Activated CD4-positive, alpha-beta T cell treated with anti-CD3 and anti-CD28 coated beads for 36 hours (primary cell): ENCODE measurements at regions of chr11 and their contacts with region 1.

Region 1: GRCh38 chr11:819129-819931 is 616 bp downstream of the PNPLA2 start:
- DNase-seq: peak; percentile 95
- ATAC-seq: peak; percentile 82
- H3K4me3 Mint-ChIP-seq: peak overlapping the region; percentile 72
- H3K27ac Mint-ChIP-seq: no peak overlapping the region
- H3K4me1 Mint-ChIP-seq: peaks cover 11% of the 10 kb centered on the region
- H3K27me3 Mint-ChIP-seq: no peaks in the 10 kb centered on the region

Region 2: DNA sequence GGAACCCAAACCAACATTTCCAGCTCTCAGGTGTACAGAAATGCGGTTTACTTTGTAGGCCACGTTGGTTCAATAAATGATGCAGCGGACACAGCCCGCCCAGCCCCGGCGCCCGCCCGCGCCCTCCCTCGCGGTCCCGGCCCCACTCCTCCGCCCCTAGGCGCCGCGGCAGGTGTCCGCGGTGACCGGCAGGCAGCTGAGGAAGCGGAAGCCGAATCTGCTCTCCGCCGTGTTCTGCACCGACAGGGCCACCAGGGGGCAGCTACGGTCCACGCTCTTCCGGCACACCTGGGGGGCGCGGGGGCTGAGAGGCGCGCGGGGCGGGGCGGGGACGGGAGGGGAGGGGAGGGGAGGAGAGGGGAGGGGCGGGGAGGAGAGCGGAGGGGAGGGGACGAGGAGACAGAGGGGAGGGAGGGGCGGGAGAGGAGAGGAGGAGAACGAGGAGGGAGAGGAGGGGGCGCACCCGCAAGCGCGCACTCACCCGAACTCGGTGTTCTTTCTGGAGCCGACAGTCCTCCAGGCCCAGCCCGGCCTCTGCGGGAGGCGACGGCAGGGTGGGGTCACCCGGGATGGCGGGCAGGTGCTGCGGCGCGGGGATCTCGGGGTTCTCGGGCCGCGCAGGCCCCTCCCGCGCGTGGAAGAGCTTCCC is 264.4 kb before region 1 on chr11:
- CTCF ChIA-PET with region 1: no interaction called
- POLR2A ChIA-PET with region 1: no interaction called
- intact Hi-C with region 1: no loop called
- DNase-seq: peak; percentile 87
- ATAC-seq: peak; percentile 85
- H3K4me3 Mint-ChIP-seq: no peak overlapping the region
- H3K27ac Mint-ChIP-seq: no peak overlapping the region
- H3K4me1 Mint-ChIP-seq: peaks cover 3% of the 10 kb centered on the region
- H3K27me3 Mint-ChIP-seq: peaks cover 2% of the 10 kb centered on the region

Region 3: GRCh38 chr11:832321-833113 is 13.2 kb after region 1 on chr11 and contains the start of gene CD151:
- CTCF ChIA-PET with region 1: no interaction called
- POLR2A ChIA-PET with region 1: interaction called, 17 read pairs
- intact Hi-C with region 1: loop called in 1 of 2 experiments (anchors 1 kb)
- DNase-seq: peak; percentile 75
- ATAC-seq: peak; percentile 55
- H3K4me3 Mint-ChIP-seq: peak within 1 kb of the TSS; percentile 69
- H3K27ac Mint-ChIP-seq: peak within 1 kb of the TSS; percentile 31
- H3K4me1 Mint-ChIP-seq: peaks cover 34% of the 10 kb centered on the region
- H3K27me3 Mint-ChIP-seq: peaks cover 31% of the 10 kb centered on the region
- total RNA-seq, gene CD151: 36.8 to 38.6 TPM

Region 4: GRCh38 chr11:910589-911195 is 91.4 kb after region 1 on chr11 and contains the start of gene CHID1:
- CTCF ChIA-PET with region 1: no interaction called
- POLR2A ChIA-PET with region 1: no interaction called
- intact Hi-C with region 1: loop called in 1 of 2 experiments (anchors 1 kb)
- DNase-seq: peak; percentile 92
- ATAC-seq: peak; percentile 98
- H3K4me3 Mint-ChIP-seq: peak within 1 kb of the TSS; percentile 88
- H3K27ac Mint-ChIP-seq: peak within 1 kb of the TSS; percentile 88
- H3K4me1 Mint-ChIP-seq: peaks cover 24% of the 10 kb centered on the region
- H3K27me3 Mint-ChIP-seq: no peaks in the 10 kb centered on the region
- total RNA-seq, gene CHID1: 60.4 to 75.3 TPM